ENCODE measurements at regions of chr20 and their contacts with region 1.

Region 1: DNA sequence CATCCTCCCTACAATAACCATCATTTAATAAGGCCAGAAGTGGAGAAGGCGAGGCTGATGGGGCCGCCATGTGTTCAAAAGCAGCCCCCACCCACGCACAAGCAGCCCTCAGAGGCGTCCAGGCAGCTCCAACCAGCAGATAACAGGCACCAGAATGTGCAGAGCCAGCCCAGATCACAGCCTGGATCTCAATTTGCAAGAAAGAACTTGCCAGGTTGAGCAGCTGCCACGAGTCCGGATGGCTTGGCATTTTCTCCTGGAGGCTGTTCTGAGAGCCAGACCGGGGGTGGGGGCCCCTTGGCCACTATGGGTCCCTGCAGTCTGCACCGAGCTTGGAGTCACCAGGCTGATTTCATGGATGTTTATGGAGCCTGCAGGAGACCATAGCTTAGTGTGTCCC is 338.1 kb downstream of the PREX1 start:
- DNase-seq: no peak
- H3K4me3 Mint-ChIP-seq: no peak overlapping the region
- H3K27ac Mint-ChIP-seq: no peak overlapping the region
- H3K4me1 Mint-ChIP-seq: peaks cover 51% of the 10 kb centered on the region
- H3K27me3 Mint-ChIP-seq: peaks cover 17% of the 10 kb centered on the region
- CTCF ChIP-seq: no peak

Region 2: DNA sequence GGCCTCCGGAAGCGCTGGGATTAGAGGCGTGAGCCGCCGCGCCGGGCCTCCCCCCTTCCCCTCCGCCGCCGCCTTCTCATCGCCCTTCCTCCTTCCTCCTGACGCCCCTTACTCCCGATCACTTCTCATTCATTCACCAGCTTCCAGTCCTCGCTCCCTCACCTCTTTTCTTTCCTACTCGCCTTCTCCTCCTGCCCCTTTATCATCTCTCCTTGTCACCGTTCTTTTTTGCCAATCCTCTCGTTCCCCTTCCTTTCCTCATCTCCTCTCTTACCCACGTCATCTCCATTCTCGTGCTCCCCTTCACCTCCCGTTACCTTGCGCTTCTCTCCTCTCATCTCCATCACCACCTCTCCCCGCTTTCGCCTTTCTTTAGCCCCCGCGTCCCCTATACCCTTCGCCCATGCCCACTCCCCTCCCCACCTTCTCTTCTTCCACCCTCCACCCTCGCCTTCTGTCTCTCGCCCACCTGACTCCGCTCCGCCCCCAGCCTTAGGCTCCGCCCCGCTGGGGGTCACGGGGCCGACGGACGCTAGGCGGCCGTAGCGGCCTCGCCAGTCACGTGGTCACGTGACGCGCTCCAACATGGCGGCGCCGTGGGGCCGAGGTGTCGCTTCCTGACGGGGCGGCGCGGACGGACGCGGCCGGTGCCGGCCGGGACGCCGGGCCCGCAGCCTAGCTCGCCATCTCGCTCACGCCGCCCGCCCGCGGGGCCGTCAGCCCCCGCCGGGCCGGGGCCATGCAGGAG is 431.7 kb after region 1 on chr20 and contains the start of gene ARFGEF2:
- CTCF ChIA-PET with region 1: no interaction called
- intact Hi-C with region 1: loop called (anchors 5 kb)
- DNase-seq: peak; percentile 99
- H3K4me3 Mint-ChIP-seq: peak within 1 kb of the TSS; percentile 78
- H3K27ac Mint-ChIP-seq: peak within 1 kb of the TSS; percentile 99
- H3K4me1 Mint-ChIP-seq: peaks cover 36% of the 10 kb centered on the region
- H3K27me3 Mint-ChIP-seq: no peaks in the 10 kb centered on the region
- CTCF ChIP-seq: peak; percentile 8
- total RNA-seq, gene ARFGEF2: 55.0 and 59.2 TPM in 2 replicates